ENCODE measurements at regions of chr3 and their contacts with region 1.

Region 1: GRCh38 chr3:177371888-177372287 is 174.6 kb upstream of the TBL1XR1 start:
- DNase-seq: no peak
- H3K4me3 ChIP-seq: no peak overlapping the region
- H3K27me3 ChIP-seq: no peaks in the 10 kb centered on the region
- CTCF ChIP-seq: no peak

Region 2: DNA sequence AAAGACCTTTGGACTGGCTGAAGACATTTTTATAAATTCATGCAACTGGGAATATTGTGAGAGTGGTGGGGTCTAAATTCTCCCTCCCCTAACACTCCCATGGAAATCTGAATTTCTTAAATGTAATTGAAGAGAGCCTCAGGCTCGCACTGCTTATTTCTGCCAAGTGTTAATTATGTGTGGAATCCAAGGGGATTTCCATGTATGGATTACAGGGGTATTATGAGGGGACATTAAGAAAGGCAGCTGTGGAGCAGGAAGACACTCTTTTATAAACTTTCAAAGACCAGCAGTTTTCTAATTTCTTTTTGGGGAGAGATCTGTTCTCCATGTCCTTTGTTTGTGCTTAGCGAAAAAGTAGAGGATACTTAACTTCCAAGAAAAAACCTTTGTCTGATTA is 22.5 kb before region 1 on chr3:
- CTCF ChIA-PET with region 1: no interaction called
- POLR2A ChIA-PET with region 1: no interaction called
- DNase-seq: no peak
- H3K4me3 ChIP-seq: no peak overlapping the region
- H3K27me3 ChIP-seq: no peaks in the 10 kb centered on the region
- CTCF ChIP-seq: no peak

Region 3: GRCh38 chr3:177359593-177360357 is 12.1 kb before region 1 on chr3:
- CTCF ChIA-PET with region 1: interaction called, 13 read pairs
- POLR2A ChIA-PET with region 1: no interaction called
- DNase-seq: peak; percentile 88
- H3K4me3 ChIP-seq: peak overlapping the region; percentile 18; the same call in 1 of the 2 replicates
- H3K27me3 ChIP-seq: no peaks in the 10 kb centered on the region
- CTCF ChIP-seq: no peak

Measured in BJ (cell line).